ENCODE measurements at regions of chr13 and their contacts with region 1.

Region 1: DNA sequence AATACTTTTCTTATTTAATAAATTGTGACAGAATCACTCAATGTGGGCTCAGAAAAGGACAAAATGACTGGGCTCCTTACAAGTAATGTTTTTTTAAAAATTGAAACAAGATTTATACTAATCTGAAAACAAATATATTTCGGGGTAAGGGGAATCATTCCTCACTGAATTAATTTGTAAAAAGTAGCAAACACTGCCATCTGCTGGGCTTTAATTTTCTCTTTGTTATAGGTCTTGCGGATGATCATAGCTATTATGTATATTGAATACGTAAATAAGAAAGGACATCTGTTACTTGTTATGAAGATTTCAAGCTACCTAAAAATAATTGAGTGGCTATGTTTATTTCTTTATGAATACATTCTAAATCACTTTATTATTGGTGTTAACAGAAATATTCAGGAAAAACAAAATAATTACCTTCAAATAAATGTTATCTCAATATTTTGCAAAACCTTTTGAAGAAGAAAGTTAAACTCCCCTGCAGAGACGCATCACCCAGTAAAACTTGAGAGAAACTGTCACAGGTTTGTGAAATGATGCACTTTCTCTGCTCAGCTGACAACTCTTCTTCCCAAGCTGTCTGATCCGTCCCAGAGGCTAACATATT is 17.8 kb upstream of the ENOX1 start:
- DNase-seq: no peak
- H3K4me3 Mint-ChIP-seq: no peak overlapping the region
- H3K27ac Mint-ChIP-seq: no peak overlapping the region
- H3K4me1 Mint-ChIP-seq: no peaks in the 10 kb centered on the region
- H3K27me3 Mint-ChIP-seq: peaks cover 5% of the 10 kb centered on the region

Region 2: GRCh38 chr13:42969558-42970172 is 834.9 kb before region 1 on chr13:
- CTCF ChIA-PET with region 1: interaction called, 15 read pairs
- DNase-seq: peak; percentile 88
- H3K4me3 Mint-ChIP-seq: no peak overlapping the region
- H3K27ac Mint-ChIP-seq: no peak overlapping the region
- H3K4me1 Mint-ChIP-seq: peaks cover 17% of the 10 kb centered on the region
- H3K27me3 Mint-ChIP-seq: no peaks in the 10 kb centered on the region

Region 3: DNA sequence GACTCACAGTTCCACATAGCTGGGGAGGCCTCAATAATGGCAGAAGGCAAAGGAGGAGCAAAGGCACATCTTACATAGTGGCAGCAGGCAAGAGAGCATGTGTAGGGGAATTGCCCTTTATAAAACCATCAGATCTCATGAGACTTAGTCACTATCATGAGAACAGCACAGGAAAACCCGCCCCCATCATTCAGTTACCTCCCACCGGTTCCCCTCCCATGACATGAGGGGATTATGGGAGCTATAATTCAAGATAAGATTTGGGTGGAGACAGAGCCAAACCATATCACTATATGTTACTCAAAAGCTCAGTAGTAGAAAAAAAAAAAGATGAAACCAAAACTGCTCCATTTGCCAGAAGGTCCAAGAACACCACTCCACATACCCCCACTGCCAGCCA is 722.7 kb before region 1 on chr13:
- CTCF ChIA-PET with region 1: interaction called, 15 read pairs
- DNase-seq: no peak
- H3K4me3 Mint-ChIP-seq: no peak overlapping the region
- H3K27ac Mint-ChIP-seq: no peak overlapping the region
- H3K4me1 Mint-ChIP-seq: peaks cover 2% of the 10 kb centered on the region
- H3K27me3 Mint-ChIP-seq: no peaks in the 10 kb centered on the region

Region 4: DNA sequence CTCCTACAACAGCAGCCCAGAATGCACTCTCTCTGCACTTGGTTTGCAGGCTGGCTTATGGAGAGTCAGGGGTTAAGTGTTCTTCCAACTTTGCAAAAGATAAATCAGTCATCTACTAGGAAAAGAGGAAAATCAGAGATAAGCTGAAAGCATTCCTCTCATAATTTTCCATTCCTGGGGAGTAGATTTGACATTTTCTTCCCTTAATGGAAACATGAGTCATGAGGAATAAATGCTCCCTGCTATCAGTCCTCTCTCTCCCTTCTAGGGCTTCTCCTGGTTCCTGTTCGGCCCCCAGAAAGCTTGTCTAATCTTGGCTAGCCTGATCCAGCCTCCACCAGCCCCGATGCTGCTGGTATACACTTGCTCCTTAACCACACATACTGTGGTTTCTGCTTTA is 10.6 kb after region 1 on chr13:
- CTCF ChIA-PET with region 1: no interaction called
- DNase-seq: no peak
- H3K4me3 Mint-ChIP-seq: no peak overlapping the region
- H3K27ac Mint-ChIP-seq: no peak overlapping the region
- H3K4me1 Mint-ChIP-seq: no peaks in the 10 kb centered on the region
- H3K27me3 Mint-ChIP-seq: peaks cover 21% of the 10 kb centered on the region

Measured in activated naive CD4-positive, alpha-beta T cell treated with anti-CD3 and anti-CD28 coated beads, Interleukin-2, amount 10 ng/mL, durations not matched to agents 7 days and 5 days (primary cell).